ENCODE measurements at regions of chr3 and their contacts with region 1.

Region 1: DNA sequence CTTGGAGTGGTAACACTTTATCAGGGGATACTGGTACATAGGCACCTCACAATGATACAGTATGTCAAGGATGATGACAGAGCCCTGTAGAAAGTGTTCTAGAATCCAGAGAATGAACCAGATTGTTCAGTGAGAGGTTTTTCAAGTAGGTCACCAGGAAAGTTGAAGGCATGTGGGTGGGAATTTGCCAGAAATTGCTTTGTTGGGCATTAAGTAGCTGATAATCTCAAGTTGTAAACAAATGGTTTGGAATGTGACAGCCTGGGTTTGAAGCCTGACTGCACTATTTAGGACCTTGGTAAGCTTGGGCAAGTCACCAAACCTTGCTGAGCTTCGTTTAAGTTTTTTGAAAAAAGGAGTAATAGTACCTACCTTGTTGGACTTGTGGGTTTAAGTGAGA is 12.5 kb downstream of the SLC35G2 start:
- DNase-seq: no peak
- H3K4me3 ChIP-seq: no peak overlapping the region
- H3K27ac ChIP-seq: no peak overlapping the region
- H3K4me1 ChIP-seq: no peaks in the 10 kb centered on the region
- H3K27me3 ChIP-seq: no peaks in the 10 kb centered on the region
- CTCF ChIP-seq: no peak

Region 2: DNA sequence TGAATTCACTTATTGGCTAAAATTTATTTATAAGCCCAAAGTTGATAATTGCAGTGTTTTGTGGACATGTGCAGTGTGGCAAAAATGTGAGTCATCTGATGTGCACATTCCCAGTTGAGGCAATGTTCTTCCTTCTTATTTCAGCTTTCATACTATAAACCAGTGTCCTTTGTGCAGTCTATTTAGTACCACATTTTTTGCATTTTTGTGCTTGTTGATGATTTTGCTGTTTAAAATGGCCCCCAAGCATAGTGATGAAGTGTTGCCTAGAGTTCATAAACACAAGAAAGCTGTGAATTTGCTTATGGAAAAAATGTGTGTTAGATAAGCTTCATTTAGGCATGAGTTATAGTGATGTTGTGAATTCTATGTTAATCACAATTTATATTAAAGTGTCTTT is 106.9 kb after region 1 on chr3:
- CTCF ChIA-PET with region 1: no interaction called
- dilution Hi-C with region 1: loop called (anchors 5 kb)
- in situ Hi-C with region 1: no loop called
- intact Hi-C with region 1: no loop called
- DNase-seq: no peak
- H3K4me3 ChIP-seq: no peak overlapping the region
- H3K27ac ChIP-seq: peak overlapping the region; percentile 18
- H3K4me1 ChIP-seq: peaks cover 23% of the 10 kb centered on the region
- H3K27me3 ChIP-seq: no peaks in the 10 kb centered on the region
- CTCF ChIP-seq: no peak

Measured in mammary epithelial cell (primary cell).